Dendritic cell treated with granulocyte-macrophage colony-stimulating factor and Interleukin-4, amounts not matched to agents 40 ng/mL and 50 ng/mL, for 4 days (primary cell): ENCODE measurements at regions of chr10 and their contacts with region 1.

Region 1: GRCh38 chr10:98170249-98171117 is 36.0 kb downstream of the R3HCC1L start:
- H3K4me3 Mint-ChIP-seq: no peak overlapping the region
- H3K27ac Mint-ChIP-seq: no peak overlapping the region
- H3K4me1 Mint-ChIP-seq: no peaks in the 10 kb centered on the region
- H3K27me3 Mint-ChIP-seq: no peaks in the 10 kb centered on the region

Region 2: DNA sequence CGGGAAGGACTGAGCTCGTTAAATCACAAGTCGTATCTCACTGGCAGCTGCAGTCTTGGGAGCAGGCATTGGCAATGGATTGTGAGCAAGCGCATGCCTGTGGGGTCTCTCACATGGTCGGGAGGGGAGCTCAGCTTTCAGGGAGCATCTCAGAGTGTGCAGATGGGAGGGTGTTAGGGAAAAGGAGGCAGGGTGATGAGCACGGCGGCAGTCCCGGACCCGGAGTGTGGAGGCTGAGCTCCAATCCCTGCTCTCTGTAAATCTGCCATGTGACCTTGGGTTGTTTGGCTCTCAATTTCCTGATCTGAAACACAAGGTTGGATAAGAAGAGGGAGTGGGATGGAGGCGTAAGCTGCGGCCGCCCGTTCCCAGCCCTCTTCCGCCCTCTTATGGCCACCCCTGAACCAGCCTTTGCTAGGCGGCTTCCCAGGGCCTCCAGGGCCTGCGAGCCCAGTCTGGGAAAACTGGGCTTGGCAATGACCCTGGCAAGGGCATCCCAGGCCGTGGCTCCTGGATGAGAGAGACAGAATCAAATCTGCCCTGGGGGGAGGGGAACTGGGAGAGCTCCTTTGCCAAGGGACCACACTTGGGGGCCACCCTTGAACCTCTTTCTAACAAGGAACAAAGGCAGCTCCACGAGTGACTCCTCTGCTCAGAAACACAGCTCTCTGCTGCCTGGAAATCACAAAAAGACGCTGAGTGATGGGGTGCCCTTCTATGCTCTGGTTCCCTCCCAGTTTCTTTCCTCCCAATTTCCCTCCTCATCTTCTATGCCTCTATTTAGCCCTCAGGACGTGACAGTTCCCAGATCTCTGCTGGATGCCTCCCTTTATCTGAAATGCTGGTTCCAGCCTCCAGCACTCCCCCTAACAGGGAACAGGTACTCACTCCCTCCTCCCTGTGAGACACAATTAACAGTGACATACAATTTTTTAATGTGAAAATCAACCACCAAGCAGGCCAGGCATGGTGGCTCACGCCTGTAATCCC is 139.2 kb after region 1 on chr10:
- intact Hi-C with region 1: loop called (anchors 1 kb)
- H3K4me3 Mint-ChIP-seq: no peak overlapping the region
- H3K27ac Mint-ChIP-seq: no peak overlapping the region
- H3K4me1 Mint-ChIP-seq: peaks cover 32% of the 10 kb centered on the region
- H3K27me3 Mint-ChIP-seq: peaks cover 28% of the 10 kb centered on the region